ENCODE measurements at regions of chr20 and their contacts with region 1.

Region 1: GRCh38 chr20:53578492-53579222 is 15.0 kb downstream of the ZNF217 start:
- DNase-seq: peak; percentile 89
- ATAC-seq: peak; percentile 64
- H3K4me3 ChIP-seq: no peak overlapping the region
- H3K27ac ChIP-seq: peak overlapping the region; percentile 60
- H3K4me1 ChIP-seq: peaks cover 18% of the 10 kb centered on the region
- H3K27me3 ChIP-seq: no peaks in the 10 kb centered on the region
- CTCF ChIP-seq: peak; percentile 96
- POLR2A ChIP-seq: peak; percentile 39; the same call in 1 of the 2 replicates
- RAD21 ChIP-seq: peak; percentile 90

Region 2: DNA sequence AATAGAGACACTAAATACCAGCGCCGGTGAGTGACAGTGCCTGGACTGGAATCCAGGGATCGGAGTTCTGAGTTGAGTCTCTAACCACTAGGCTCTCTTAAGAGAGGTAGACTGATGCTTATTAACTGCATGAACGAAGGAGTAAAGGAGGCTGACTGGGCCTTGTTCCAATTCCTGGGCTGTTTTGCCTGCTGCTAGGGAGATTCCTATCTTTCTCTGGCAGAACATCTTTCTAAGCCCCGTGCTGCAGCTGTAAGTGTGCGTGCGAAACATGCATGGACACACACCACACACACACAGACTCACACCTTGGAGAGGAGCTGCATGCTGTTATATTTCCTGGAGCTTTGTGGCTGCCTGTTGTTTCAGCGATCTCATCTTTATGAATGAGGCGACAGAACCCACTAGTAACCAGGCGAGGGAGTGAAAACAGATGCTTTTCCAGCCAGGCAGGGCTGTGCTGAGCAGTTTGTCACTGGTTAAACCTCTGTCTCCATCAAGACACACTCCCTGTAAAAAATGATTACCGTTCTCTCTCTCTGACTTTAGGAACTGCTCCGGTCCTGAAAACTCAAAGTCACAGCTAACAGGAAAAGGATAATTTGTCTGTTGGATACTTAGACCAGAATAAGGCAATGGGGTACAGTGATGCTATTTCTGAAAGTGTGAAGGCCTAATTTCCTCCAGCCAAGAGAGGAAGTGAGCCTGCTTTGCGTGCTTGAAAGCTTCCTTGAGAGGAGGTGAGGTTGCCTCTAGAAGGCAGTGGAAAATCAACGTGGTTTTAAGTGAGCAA is 172.4 kb after region 1 on chr20:
- CTCF ChIA-PET with region 1: no interaction called
- POLR2A ChIA-PET with region 1: no interaction called
- dilution Hi-C with region 1: no loop called
- in situ Hi-C with region 1: loop called (anchors 10 kb)
- intact Hi-C with region 1: no loop called
- DNase-seq: peak; percentile 91
- ATAC-seq: peak; percentile 71
- H3K4me3 ChIP-seq: no peak overlapping the region
- H3K27ac ChIP-seq: peak overlapping the region; percentile 69
- H3K4me1 ChIP-seq: peaks cover 22% of the 10 kb centered on the region
- H3K27me3 ChIP-seq: no peaks in the 10 kb centered on the region
- CTCF ChIP-seq: no peak
- POLR2A ChIP-seq: peak; percentile 49
- RAD21 ChIP-seq: no peak; the same call in 1 of the 2 replicates

Region 3: DNA sequence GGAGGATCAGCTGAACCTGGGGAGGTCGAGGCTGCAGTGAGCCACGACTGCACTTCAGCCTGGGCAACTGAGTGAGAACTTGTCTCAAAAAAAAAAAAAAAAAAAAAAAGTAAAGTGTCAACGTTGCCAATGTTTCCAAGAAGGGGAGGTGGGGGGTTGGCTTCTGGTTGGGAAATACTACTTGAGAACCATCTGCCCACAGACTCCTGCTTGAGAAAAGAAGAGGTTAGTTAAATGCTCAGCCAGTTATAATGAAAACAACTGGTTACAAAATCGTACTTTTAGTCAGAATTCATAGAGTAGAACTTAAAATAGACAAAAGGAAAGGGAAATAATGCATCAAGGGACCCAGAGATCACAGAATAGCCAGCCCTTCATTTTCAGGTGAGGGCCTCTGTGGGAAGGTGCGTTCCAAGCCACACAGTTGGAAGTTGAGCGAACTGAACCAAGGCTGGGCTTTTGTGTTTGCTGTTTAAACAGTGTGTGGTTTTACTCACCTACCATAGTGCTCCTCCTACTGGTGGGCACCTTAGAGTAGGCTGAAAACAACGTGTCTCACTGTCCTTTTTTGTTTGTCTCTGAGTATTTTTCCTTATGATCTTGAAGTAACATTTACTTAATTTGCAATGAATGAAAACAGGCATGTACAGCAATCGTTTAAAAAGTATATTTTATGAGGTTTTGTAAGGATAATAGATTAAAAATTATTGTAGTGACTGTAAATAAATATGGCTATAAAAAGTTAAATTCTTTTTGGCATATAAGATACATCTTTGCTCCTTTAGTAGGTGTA is 291.0 kb after region 1 on chr20:
- CTCF ChIA-PET with region 1: interaction called, 3 read pairs
- POLR2A ChIA-PET with region 1: interaction called, 7 read pairs
- dilution Hi-C with region 1: no loop called
- in situ Hi-C with region 1: no loop called
- intact Hi-C with region 1: loop called (anchors 2 kb)
- DNase-seq: peak; percentile 74
- ATAC-seq: peak; percentile 17; the same call in 1 of the 2 replicates
- H3K4me3 ChIP-seq: no peak overlapping the region
- H3K27ac ChIP-seq: peak overlapping the region; percentile 50; the same call in 1 of the 2 replicates
- H3K4me1 ChIP-seq: peaks cover 29% of the 10 kb centered on the region
- H3K27me3 ChIP-seq: no peaks in the 10 kb centered on the region
- CTCF ChIP-seq: peak; percentile 68
- POLR2A ChIP-seq: no peak
- RAD21 ChIP-seq: peak; percentile 74

Region 4: GRCh38 chr20:53939572-53940359 is 361.1 kb after region 1 on chr20:
- CTCF ChIA-PET with region 1: interaction called, 14 read pairs
- POLR2A ChIA-PET with region 1: no interaction called
- dilution Hi-C with region 1: no loop called
- in situ Hi-C with region 1: loop called (anchors 5 kb)
- intact Hi-C with region 1: loop called (anchors 1 kb)
- DNase-seq: peak; percentile 94
- ATAC-seq: peak; percentile 89
- H3K4me3 ChIP-seq: no peak overlapping the region
- H3K27ac ChIP-seq: peak overlapping the region; percentile 66
- H3K4me1 ChIP-seq: peaks cover 16% of the 10 kb centered on the region
- H3K27me3 ChIP-seq: no peaks in the 10 kb centered on the region
- CTCF ChIP-seq: peak; percentile 92
- POLR2A ChIP-seq: 0 out of 2 replicates have a peak, but pooled peaks have one; percentile 61
- RAD21 ChIP-seq: peak; percentile 95

Region 5: DNA sequence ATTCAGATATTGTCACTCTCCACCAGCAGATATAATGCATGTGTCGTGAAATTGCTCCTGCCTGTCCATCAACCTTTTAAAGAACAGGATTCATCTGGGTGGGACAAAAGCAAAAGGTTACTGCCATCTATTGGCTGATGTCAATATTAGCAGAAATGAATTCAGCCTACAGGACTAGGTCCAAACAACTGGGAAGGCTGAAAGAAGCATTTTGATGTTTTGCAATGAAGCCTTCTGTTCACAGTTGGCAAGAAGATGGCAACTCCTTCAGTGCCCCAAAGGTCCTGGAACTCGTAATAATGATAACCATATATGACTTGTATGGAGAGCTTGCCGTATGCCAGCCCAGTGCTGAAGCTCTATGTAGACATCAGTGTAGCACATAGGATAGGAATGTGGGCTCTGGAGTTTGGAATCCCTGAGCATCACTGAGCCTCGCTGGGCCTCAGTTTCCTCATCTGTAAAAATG is 484.2 kb after region 1 on chr20:
- CTCF ChIA-PET with region 1: no interaction called
- POLR2A ChIA-PET with region 1: no interaction called
- dilution Hi-C with region 1: no loop called
- in situ Hi-C with region 1: no loop called
- intact Hi-C with region 1: loop called (anchors 10 kb)
- DNase-seq: peak; percentile 31
- ATAC-seq: peak; percentile 71; the same call in 1 of the 2 replicates
- H3K4me3 ChIP-seq: no peak overlapping the region
- H3K27ac ChIP-seq: no peak overlapping the region
- H3K4me1 ChIP-seq: no peaks in the 10 kb centered on the region
- H3K27me3 ChIP-seq: peaks cover 2% of the 10 kb centered on the region
- CTCF ChIP-seq: peak; percentile 48
- POLR2A ChIP-seq: no peak
- RAD21 ChIP-seq: peak; percentile 65

Region 6: GRCh38 chr20:54207743-54208547 is 629.3 kb after region 1 on chr20 and contains the start of gene PFDN4:
- CTCF ChIA-PET with region 1: no interaction called
- POLR2A ChIA-PET with region 1: no interaction called
- dilution Hi-C with region 1: no loop called
- in situ Hi-C with region 1: loop called (anchors 10 kb)
- intact Hi-C with region 1: no loop called
- DNase-seq: peak; percentile 79
- ATAC-seq: peak; percentile 94
- H3K4me3 ChIP-seq: peak within 1 kb of the TSS; percentile 79
- H3K27ac ChIP-seq: peak within 1 kb of the TSS; percentile 100
- H3K4me1 ChIP-seq: peaks cover 5% of the 10 kb centered on the region
- H3K27me3 ChIP-seq: peaks cover 1% of the 10 kb centered on the region; the same call in 1 of the 2 replicates
- CTCF ChIP-seq: peak; percentile 89
- POLR2A ChIP-seq: peak; percentile 50; the same call in 1 of the 2 replicates
- RAD21 ChIP-seq: peak; percentile 44
- total RNA-seq, gene PFDN4: 14.9 and 83.9 TPM in 2 replicates

Measured in IMR-90 (cell line).